A673 (cell line): ENCODE measurements at regions of chrX and their contacts with region 1.

Region 1: DNA sequence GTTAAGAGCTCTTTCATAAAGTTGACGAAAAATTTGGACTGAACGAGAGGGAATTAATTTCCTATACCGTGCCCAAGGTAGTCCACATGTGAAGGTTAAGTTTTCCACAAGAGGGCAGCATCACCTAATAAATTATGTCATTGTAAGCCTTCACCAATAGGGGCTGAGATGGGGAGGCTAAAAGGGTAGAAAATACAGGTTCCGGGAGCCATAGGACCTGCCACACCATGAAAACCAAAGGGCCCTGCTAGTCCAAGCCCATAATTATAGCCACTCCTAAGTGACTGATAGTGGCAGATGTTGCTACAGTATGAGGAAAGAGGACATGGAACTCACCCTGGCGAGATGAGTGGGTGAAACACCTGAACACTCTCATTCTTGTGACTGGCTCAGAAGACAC is 122.2 kb downstream of the SHROOM4 start:
- DNase-seq: peak; percentile 85
- H3K4me3 ChIP-seq: no peak overlapping the region
- H3K27ac ChIP-seq: no peak overlapping the region
- H3K4me1 ChIP-seq: no peaks in the 10 kb centered on the region
- H3K27me3 ChIP-seq: no peaks in the 10 kb centered on the region
- CTCF ChIP-seq: peak; percentile 76

Region 2: GRCh38 chrX:50747471-50747900 is 55.7 kb after region 1 on chrX:
- CTCF ChIA-PET with region 1: interaction called, 4 read pairs
- POLR2A ChIA-PET with region 1: no interaction called
- intact Hi-C with region 1: loop called (anchors 5 kb)
- DNase-seq: peak; percentile 66
- H3K4me3 ChIP-seq: no peak overlapping the region
- H3K27ac ChIP-seq: no peak overlapping the region
- H3K4me1 ChIP-seq: peaks cover 3% of the 10 kb centered on the region
- H3K27me3 ChIP-seq: no peaks in the 10 kb centered on the region
- CTCF ChIP-seq: peak; percentile 84

Region 3: DNA sequence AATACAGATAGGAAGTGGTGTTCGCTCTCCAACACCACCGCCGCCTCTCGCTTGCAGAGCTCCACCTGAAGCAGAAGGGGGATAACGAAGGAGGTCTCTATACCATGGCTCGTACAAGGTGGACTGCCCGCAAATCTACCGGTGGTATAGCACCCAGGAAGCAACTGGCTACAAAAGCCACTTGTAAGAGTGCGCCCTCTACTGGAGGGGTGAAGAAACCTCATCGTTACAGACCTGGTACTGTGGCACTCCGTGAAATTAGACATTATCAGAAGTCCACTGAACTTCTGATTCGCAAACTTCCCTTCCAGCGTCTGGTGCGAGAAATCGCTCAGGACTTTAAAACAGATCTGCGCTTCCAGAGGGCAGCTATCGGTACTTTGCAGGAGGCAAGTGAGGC is 213.5 kb after region 1 on chrX:
- CTCF ChIA-PET with region 1: interaction called, 5 read pairs
- POLR2A ChIA-PET with region 1: no interaction called
- intact Hi-C with region 1: loop called (anchors 5 kb)
- DNase-seq: peak; percentile 11
- H3K4me3 ChIP-seq: no peak overlapping the region
- H3K27ac ChIP-seq: no peak overlapping the region
- H3K4me1 ChIP-seq: no peaks in the 10 kb centered on the region
- H3K27me3 ChIP-seq: no peaks in the 10 kb centered on the region
- CTCF ChIP-seq: peak; percentile 60

Region 4: GRCh38 chrX:50920132-50920531 is 228.3 kb after region 1 on chrX:
- CTCF ChIA-PET with region 1: no interaction called
- POLR2A ChIA-PET with region 1: no interaction called
- intact Hi-C with region 1: loop called (anchors 5 kb)
- DNase-seq: peak; percentile 63
- H3K4me3 ChIP-seq: no peak overlapping the region
- H3K27ac ChIP-seq: no peak overlapping the region
- H3K4me1 ChIP-seq: no peaks in the 10 kb centered on the region
- H3K27me3 ChIP-seq: no peaks in the 10 kb centered on the region
- CTCF ChIP-seq: peak; percentile 58

Region 5: DNA sequence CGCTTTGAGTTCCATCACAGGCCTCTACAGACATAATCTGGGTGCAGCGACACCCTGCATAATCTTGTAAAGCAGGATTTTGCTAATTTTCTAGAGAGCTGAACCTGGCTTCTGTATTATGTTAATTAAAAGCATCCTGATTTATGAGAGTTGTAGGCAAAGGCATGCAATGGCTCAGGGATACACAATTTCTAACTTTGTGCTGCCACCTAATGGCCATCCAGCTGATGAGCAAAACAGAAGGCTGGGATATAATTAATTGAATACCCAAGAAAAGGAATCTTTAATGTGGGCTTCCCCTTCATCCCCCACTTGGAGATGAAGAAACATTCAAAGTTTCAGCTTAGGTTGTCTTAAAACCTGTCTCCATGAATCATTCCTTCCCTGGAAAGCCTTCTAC is 296.8 kb after region 1 on chrX:
- CTCF ChIA-PET with region 1: interaction called, 3 read pairs
- POLR2A ChIA-PET with region 1: no interaction called
- intact Hi-C with region 1: loop called (anchors 2 kb)
- DNase-seq: peak; percentile 67
- H3K4me3 ChIP-seq: no peak overlapping the region
- H3K27ac ChIP-seq: no peak overlapping the region
- H3K4me1 ChIP-seq: no peaks in the 10 kb centered on the region
- H3K27me3 ChIP-seq: no peaks in the 10 kb centered on the region
- CTCF ChIP-seq: peak; percentile 75